ENCODE measurements at regions of chr5 and their contacts with region 1.

Region 1: GRCh38 chr5:84437673-84438315 is 53.1 kb upstream of the EDIL3 start:
- DNase-seq: no peak
- H3K4me3 ChIP-seq: no peak overlapping the region
- H3K4me3 Mint-ChIP-seq: no peak overlapping the region
- H3K27ac Mint-ChIP-seq: no peak overlapping the region
- H3K4me1 ChIP-seq: peaks cover 9% of the 10 kb centered on the region
- H3K4me1 Mint-ChIP-seq: no peaks in the 10 kb centered on the region
- H3K27me3 ChIP-seq: no peaks in the 10 kb centered on the region
- H3K27me3 Mint-ChIP-seq: peaks cover 2% of the 10 kb centered on the region
- CTCF ChIP-seq: no peak

Region 2: GRCh38 chr5:84372066-84372695 is 65.6 kb before region 1 on chr5:
- CTCF ChIA-PET with region 1: no interaction called
- POLR2A ChIA-PET with region 1: no interaction called
- intact Hi-C with region 1: no loop called
- DNase-seq: no peak
- H3K4me3 ChIP-seq: no peak overlapping the region
- H3K4me3 Mint-ChIP-seq: no peak overlapping the region
- H3K27ac Mint-ChIP-seq: no peak overlapping the region
- H3K4me1 ChIP-seq: no peaks in the 10 kb centered on the region
- H3K4me1 Mint-ChIP-seq: no peaks in the 10 kb centered on the region
- H3K27me3 ChIP-seq: no peaks in the 10 kb centered on the region
- H3K27me3 Mint-ChIP-seq: peaks cover 13% of the 10 kb centered on the region
- CTCF ChIP-seq: no peak

Region 3: GRCh38 chr5:84382363-84383295 is 55.2 kb before region 1 on chr5:
- CTCF ChIA-PET with region 1: no interaction called
- POLR2A ChIA-PET with region 1: no interaction called
- intact Hi-C with region 1: loop called (anchors 5 kb)
- DNase-seq: peak; percentile 45 to 52
- H3K4me3 ChIP-seq: peak overlapping the region; percentile 29
- H3K4me3 Mint-ChIP-seq: peak overlapping the region; percentile 68
- H3K27ac Mint-ChIP-seq: no peak overlapping the region
- H3K4me1 ChIP-seq: no peaks in the 10 kb centered on the region
- H3K4me1 Mint-ChIP-seq: peaks cover 6% of the 10 kb centered on the region
- H3K27me3 ChIP-seq: no peaks in the 10 kb centered on the region
- H3K27me3 Mint-ChIP-seq: peaks cover 23% of the 10 kb centered on the region
- CTCF ChIP-seq: no peak

Region 4: GRCh38 chr5:84623019-84623418 is 185.2 kb after region 1 on chr5:
- CTCF ChIA-PET with region 1: no interaction called
- POLR2A ChIA-PET with region 1: no interaction called
- intact Hi-C with region 1: no loop called
- DNase-seq: no peak
- H3K4me3 ChIP-seq: no peak overlapping the region
- H3K4me3 Mint-ChIP-seq: no peak overlapping the region
- H3K27ac Mint-ChIP-seq: no peak overlapping the region
- H3K4me1 ChIP-seq: peaks cover 7% of the 10 kb centered on the region; the same call in 1 of the 2 replicates
- H3K4me1 Mint-ChIP-seq: no peaks in the 10 kb centered on the region
- H3K27me3 ChIP-seq: no peaks in the 10 kb centered on the region
- H3K27me3 Mint-ChIP-seq: no peaks in the 10 kb centered on the region
- CTCF ChIP-seq: no peak

Measured in Caco-2 (cell line).